ENCODE measurements at regions of chr2 and their contacts with region 1.

Region 1: DNA sequence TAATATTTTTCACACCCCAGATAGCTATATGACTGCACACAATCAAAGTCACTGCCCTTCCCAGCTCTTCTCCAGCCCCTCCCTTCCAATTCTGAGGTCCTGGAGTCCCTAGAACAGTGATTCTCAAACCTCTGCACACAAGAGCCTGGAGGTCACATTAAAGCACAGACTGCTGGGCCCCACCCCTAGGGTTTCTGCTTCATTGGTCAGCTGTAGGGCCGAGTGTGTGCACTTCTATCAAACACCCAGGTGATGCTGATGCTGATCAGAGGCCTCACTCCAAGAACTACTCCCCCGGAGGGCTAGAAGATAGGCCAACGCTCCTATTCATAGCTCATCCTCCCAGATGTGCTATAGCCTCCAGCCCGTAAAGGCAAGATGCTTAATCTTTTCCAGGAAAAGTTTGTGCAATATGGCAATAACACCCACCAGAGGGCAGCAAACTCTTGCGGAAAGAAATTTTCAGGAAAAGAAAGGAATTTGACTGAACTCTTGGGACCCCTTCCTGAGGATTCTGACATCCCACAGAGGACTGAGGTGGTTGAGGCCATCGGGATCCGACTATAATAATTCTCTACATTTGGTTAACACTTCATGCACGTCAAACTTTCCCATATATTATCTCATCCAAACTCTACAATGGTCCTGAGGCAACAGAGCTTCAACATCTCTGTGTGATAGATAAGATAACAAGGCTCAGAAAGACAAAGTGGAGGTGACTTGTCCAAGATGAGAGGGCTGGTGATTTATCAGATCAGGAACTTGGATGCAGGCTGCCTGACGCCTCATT is 194.2 kb upstream of the PKDCC start:
- DNase-seq: peak in 4 of 10 donors; percentile 44 to 61 (median 54)

Region 2: GRCh38 chr2:41364842-41365241 is 488.8 kb before region 1 on chr2:
- intact Hi-C with region 1: no loop called
- DNase-seq: no peak

Region 3: GRCh38 chr2:42086500-42086953 is 232.9 kb after region 1 on chr2:
- intact Hi-C with region 1: loop called (anchors 1 kb)
- DNase-seq: peak in 5 of 10 donors; percentile 53 to 90 (median 59)

Region 4: GRCh38 chr2:42183775-42184174 is 330.2 kb after region 1 on chr2:
- intact Hi-C with region 1: no loop called
- DNase-seq: no peak